Calu3 (cell line): ENCODE measurements at regions of chr5 and their contacts with region 1.

Region 1: DNA sequence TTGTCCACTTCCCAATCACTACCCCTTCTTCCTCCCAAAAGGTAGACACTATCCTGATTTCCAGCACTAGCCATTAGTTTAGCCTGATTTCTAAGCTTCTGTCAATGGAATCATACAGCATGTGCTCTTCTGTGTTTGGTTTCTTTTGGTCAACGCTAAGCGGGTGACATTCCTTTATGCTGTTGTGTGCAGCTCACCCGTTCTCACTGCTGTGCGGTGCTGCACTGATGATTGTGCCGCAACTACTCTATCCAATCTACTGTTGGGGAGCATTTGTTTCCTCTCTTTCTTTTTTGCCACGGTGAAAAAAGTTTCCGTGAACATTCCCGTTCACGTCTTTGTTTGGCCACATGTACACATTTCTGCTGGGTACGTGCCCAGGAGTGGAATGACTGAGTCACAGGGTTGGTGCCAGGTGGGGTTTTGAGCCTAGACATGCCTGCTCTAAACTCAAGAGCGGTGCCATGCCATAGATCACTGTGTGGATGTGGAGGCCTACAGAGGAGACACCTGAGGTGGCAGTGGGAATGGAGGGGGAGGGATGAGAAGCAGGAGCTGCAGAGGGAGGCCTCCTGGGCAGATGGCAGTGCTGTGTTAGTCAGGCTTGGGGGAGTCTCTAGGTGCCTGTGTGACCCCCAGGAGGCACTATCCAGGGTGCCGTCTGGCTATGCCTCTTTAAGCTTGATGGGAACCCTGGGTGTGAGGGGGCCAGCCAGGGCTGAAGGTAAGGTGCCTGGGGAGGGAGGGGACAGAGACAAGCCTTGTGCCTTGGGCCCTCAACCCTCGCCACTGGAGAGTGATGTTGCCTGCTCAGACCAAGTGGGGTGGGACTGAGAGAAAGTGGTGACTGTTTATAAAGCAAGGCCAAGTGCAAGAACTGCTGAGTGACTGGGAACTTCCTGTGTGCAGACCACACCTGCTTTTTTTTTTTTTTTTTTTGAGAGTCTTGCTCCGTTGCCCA is 11.4 kb upstream of the ANKRD33B start:
- DNase-seq: no peak
- H3K4me3 Mint-ChIP-seq: no peak overlapping the region
- H3K27ac Mint-ChIP-seq: no peak overlapping the region
- H3K4me1 Mint-ChIP-seq: peaks cover 66% of the 10 kb centered on the region
- H3K27me3 Mint-ChIP-seq: no peaks in the 10 kb centered on the region
- CTCF ChIP-seq: no peak

Region 2: DNA sequence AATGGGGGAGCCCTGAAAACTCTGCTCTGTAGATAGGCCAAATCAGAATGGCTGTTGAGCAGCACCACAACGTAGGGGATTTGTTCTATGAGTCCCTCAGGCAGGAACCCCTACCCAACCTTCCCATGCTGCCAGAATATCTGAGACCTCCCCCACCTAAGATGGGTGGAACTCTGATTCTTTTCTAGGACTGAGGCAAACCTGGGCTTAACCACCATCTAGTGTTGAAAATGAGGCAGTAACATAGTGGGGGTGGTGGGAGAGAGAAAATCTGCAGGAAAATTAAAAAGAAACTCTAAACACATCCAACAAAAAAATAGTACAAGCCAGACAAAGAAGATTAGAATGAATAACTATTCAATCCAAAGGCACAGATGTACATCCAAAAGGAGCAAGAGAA is 531.2 kb before region 1 on chr5:
- CTCF ChIA-PET with region 1: no interaction called
- intact Hi-C with region 1: no loop called
- DNase-seq: no peak
- H3K4me3 Mint-ChIP-seq: no peak overlapping the region
- H3K27ac Mint-ChIP-seq: no peak overlapping the region
- H3K4me1 Mint-ChIP-seq: peaks cover 23% of the 10 kb centered on the region
- H3K27me3 Mint-ChIP-seq: no peaks in the 10 kb centered on the region
- CTCF ChIP-seq: no peak

Region 3: DNA sequence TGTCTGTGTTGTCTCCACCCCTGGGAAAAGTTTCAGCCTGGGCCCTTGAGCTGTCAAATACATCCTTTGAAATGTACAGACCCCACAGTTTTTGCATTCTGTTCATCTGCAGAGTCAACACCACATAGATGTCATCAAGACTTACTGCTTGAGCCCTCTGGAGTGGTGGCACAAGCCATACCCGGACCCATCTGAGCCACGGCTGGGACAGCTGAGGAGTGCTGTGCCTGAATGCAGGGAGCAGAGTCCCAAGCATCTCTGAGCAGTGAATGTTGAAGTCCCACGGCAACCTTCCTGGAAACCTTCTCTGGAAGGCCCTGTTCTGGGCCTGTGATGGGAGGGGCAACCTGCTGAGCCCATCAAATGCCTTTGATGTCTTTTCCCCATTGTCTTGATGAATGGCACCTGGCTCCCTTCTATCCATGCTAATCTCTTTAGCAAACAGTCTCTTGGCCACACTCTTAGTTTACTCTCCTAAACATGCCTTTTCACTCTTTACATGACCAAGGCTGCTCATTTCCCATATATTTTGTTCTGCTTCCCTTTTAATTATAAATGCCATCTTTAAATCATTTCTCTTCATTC is 395.3 kb before region 1 on chr5:
- CTCF ChIA-PET with region 1: no interaction called
- intact Hi-C with region 1: no loop called
- DNase-seq: no peak
- H3K4me3 Mint-ChIP-seq: no peak overlapping the region
- H3K27ac Mint-ChIP-seq: no peak overlapping the region
- H3K4me1 Mint-ChIP-seq: peaks cover 7% of the 10 kb centered on the region
- H3K27me3 Mint-ChIP-seq: no peaks in the 10 kb centered on the region
- CTCF ChIP-seq: no peak

Region 4: GRCh38 chr5:10528827-10529226 is 23.6 kb before region 1 on chr5:
- CTCF ChIA-PET with region 1: interaction called, 10 read pairs
- intact Hi-C with region 1: no loop called
- DNase-seq: no peak
- H3K4me3 Mint-ChIP-seq: no peak overlapping the region
- H3K27ac Mint-ChIP-seq: no peak overlapping the region
- H3K4me1 Mint-ChIP-seq: no peaks in the 10 kb centered on the region
- H3K27me3 Mint-ChIP-seq: no peaks in the 10 kb centered on the region
- CTCF ChIP-seq: no peak

Region 5: DNA sequence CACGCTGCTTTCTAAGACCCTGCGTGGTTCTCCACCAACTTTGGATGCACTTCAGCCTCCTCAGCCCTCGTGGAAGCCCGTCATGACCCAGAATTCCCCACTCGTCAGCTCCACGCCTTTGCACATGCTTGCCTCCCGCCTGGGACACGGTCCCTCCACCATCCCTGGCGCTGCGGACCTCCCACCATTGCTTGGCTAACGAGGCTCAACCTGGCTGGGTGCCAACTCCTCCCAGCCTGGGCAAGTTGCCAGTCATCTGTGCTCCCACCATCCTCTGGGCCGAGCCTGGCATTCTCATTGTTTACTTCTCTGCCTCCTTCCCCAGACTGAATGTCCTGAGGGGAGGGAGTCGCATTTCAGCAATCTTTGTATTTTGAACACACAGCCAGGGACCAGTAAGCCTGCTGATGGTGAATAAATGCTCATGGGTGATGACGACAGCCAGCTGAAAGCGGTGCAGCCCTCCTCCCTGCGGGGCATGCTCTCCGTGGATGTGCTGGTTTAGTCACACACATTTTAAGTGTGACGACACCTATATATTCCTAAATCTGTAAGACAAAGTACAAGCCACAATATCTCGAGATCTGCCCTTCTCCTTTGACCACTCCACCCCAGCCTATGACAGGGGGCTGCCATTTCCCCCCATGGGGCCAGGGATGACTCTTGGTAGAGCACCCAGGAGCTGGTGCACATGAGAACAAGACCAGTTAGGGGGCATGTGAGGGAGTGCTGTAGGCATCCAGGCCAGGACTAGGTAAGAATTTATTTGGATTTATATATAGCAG is 49.0 kb after region 1 on chr5:
- CTCF ChIA-PET with region 1: no interaction called
- intact Hi-C with region 1: loop called (anchors 5 kb)
- DNase-seq: peak; percentile 90
- H3K4me3 Mint-ChIP-seq: peak overlapping the region; percentile 76
- H3K27ac Mint-ChIP-seq: peak overlapping the region; percentile 90
- H3K4me1 Mint-ChIP-seq: peaks cover 36% of the 10 kb centered on the region
- H3K27me3 Mint-ChIP-seq: no peaks in the 10 kb centered on the region
- CTCF ChIP-seq: no peak

Region 6: GRCh38 chr5:11130131-11130530 is 577.7 kb after region 1 on chr5:
- CTCF ChIA-PET with region 1: no interaction called
- intact Hi-C with region 1: no loop called
- DNase-seq: no peak
- H3K4me3 Mint-ChIP-seq: no peak overlapping the region
- H3K27ac Mint-ChIP-seq: no peak overlapping the region
- H3K4me1 Mint-ChIP-seq: no peaks in the 10 kb centered on the region
- H3K27me3 Mint-ChIP-seq: no peaks in the 10 kb centered on the region
- CTCF ChIP-seq: no peak